Gastrocnemius medialis (tissue), 4 donors: ENCODE measurements at regions of chr7 and their contacts with region 1.

Region 1: GRCh38 chr7:150753826-150754603 is 16.8 kb downstream of the GIMAP5 start:
- DNase-seq: no peak
- ATAC-seq: peak in 1 of 2 donors; percentile 36
- H3K4me3 ChIP-seq: no peak overlapping the region
- H3K27ac ChIP-seq: peak overlapping the region in 3 of 4 donors; percentile 39 to 63 (median 51)
- H3K4me1 ChIP-seq: no peaks in the 10 kb centered on the region
- H3K27me3 ChIP-seq: no peaks in the 10 kb centered on the region
- CTCF ChIP-seq: no peak
- POLR2A ChIP-seq: no peak

Region 2: DNA sequence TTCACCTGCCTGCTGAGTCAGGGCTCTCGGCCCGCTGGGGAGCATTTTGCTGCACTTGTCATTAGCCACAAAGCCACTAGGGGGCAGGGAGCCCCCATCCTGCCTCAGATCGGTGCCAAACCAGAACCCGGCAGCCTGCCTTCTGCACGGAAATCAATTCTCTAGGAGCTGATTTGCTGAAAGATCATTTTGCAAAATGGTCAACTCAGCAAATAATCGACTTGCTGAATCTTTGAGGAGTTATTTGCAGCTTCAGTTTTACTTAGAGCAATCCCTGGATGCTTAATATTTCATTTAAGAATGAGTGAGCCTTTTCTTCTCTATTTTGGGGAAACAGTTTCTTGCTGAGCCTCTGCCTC is 305.2 kb before region 1 on chr7:
- in situ Hi-C with region 1: loop called in 2 of 4 experiments (anchors 10 kb)
- intact Hi-C with region 1: loop called (anchors 5 kb)
- DNase-seq: peak; percentile 29 to 43
- ATAC-seq: no peak
- H3K4me3 ChIP-seq: peak overlapping the region in 1 of 4 donors; percentile 40
- H3K27ac ChIP-seq: peak overlapping the region in 3 of 4 donors; percentile 73 to 78 (median 75)
- H3K4me1 ChIP-seq: no peaks in the 10 kb centered on the region
- H3K27me3 ChIP-seq: peaks cover 0 to 12% (median 7%) of the 10 kb centered on the region in 3 donors
- CTCF ChIP-seq: peak; percentile 35 to 66 (median 65)
- POLR2A ChIP-seq: no peak